Endothelial cell of umbilical vein (primary cell): ENCODE measurements at regions of chr10 and their contacts with region 1.

Region 1: GRCh38 chr10:78211561-78212051 is 177.9 kb downstream of the RPS24 start:
- DNase-seq: peak; percentile 55
- H3K4me3 ChIP-seq: no peak overlapping the region
- H3K27ac ChIP-seq: no peak overlapping the region
- H3K4me1 ChIP-seq: no peaks in the 10 kb centered on the region
- H3K27me3 ChIP-seq: peaks cover 4 to 5% of the 10 kb centered on the region in 2 experiments
- CTCF ChIP-seq: peak; percentile 49 to 65
- POLR2A ChIP-seq: no peak

Region 2: DNA sequence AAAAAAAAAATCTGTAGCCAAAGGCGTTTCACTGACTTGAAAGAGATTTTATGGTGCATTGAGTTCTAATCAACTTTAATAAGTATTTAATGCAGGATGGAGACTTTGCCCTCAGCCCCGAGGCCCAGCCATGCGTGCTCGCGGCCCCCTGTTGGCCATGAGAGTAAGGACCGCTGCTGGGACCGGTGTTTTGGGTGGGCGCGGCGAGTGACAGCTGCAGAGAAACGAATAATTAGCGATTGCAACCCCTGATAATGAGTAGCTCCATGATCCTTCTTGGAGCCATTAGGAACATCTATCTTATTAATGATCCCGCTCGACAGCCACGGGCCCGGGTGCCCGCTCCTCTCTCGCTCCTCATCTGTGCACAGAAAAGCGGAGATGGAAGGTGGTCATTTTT is 169.5 kb after region 1 on chr10:
- CTCF ChIA-PET with region 1: no interaction called
- POLR2A ChIA-PET with region 1: no interaction called
- dilution Hi-C with region 1: no loop called
- intact Hi-C with region 1: loop called (anchors 1 kb)
- DNase-seq: no peak
- H3K4me3 ChIP-seq: no peak overlapping the region
- H3K27ac ChIP-seq: no peak overlapping the region
- H3K4me1 ChIP-seq: no peaks in the 10 kb centered on the region
- H3K27me3 ChIP-seq: peaks cover 2 to 11% of the 10 kb centered on the region in 2 experiments
- CTCF ChIP-seq: peak; percentile 40 to 57
- POLR2A ChIP-seq: no peak

Region 3: GRCh38 chr10:78437998-78438906 is 226.6 kb after region 1 on chr10:
- CTCF ChIA-PET with region 1: no interaction called
- POLR2A ChIA-PET with region 1: no interaction called
- dilution Hi-C with region 1: no loop called
- intact Hi-C with region 1: loop called (anchors 1 kb)
- DNase-seq: no peak
- H3K4me3 ChIP-seq: no peak overlapping the region
- H3K27ac ChIP-seq: no peak overlapping the region
- H3K4me1 ChIP-seq: peaks cover 9% of the 10 kb centered on the region
- H3K27me3 ChIP-seq: no peaks in the 10 kb centered on the region
- CTCF ChIP-seq: peak in 1 of 2 donors; percentile 4
- POLR2A ChIP-seq: no peak